SK-N-SH (cell line): ENCODE measurements at regions of chr7 and their contacts with region 1.

Region 1: GRCh38 chr7:11212080-11212711 is 238.5 kb downstream of the PHF14 start:
- DNase-seq: peak; percentile 56
- H3K4me3 ChIP-seq: no peak overlapping the region; a peak in 1 of 4 replicates
- H3K27ac ChIP-seq: no peak overlapping the region
- H3K4me1 ChIP-seq: peaks cover 0 to 5% of the 10 kb centered on the region in 2 experiments; a peak in 2 of 4 replicates
- H3K27me3 ChIP-seq: no peaks in the 10 kb centered on the region
- CTCF ChIP-seq: peak; percentile 98
- EP300 ChIP-seq: no peak
- RAD21 ChIP-seq: peak; percentile 92

Region 2: DNA sequence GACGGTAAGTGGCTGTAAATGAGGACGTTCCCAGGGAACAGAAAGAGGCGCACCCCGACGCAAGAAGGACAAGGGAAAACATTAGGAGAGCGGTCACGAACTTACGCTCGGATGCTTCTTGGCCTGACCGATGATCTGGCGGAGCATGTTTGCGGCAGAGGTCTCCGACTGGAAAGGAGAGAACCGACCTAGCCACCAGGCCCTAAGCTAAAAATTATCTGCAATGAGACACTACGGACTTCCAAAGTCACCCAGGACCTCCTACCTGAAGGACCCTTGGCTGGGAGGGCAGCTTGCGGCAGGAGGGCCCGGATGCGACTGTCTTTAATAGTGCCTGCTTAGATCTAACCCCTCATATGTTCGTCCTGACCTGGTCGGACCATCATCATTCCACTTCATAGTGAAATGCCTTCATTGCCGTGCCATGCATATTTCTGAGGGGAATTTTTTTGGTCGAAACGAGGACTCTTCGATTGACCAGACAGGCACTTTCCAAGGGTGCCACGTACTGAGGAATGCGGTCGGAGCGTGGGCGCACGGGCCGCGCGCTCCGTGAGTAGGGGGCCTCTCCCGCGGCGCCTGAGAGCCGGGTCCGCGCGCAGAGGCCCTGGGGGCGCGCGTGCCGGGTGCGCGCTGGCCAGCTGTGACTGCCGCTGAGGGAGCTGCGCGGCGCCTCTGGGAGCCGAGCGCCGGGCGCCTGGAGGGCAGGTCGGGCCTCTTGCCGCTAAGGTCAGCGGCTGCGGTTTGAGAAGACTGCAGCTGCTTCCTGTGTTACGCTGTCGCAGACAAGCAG is 272.1 kb before region 1 on chr7:
- CTCF ChIA-PET with region 1: interaction called, 19 read pairs
- POLR2A ChIA-PET with region 1: interaction called, 12 read pairs
- DNase-seq: peak; percentile 99
- H3K4me3 ChIP-seq: peak overlapping the region; percentile 91 to 92
- H3K27ac ChIP-seq: peak overlapping the region; percentile 95 to 99
- H3K4me1 ChIP-seq: peaks cover 5 to 18% of the 10 kb centered on the region in 2 experiments; a peak in 2 of 4 replicates
- H3K27me3 ChIP-seq: no peaks in the 10 kb centered on the region
- CTCF ChIP-seq: no peak
- EP300 ChIP-seq: no peak
- RAD21 ChIP-seq: peak; percentile 30

Region 3: DNA sequence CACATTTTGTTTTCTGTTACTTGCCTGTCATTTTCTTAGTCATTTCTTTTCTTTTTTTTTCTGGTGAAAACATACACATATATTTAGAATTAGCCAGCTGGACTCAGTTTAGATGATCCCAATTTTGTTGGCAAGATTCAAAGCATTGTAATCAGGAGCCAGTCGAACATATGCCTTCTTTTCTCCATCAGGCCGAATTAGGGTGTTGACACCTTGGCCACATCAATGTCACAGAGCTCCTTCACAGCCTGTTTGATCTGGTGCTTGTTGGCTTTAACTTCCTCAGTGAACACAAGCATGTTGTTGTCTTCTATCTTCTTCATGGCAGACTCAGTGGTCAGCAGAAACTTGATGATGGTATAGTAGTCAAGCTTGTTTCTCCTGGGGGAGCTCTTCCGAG is 205.9 kb before region 1 on chr7:
- CTCF ChIA-PET with region 1: no interaction called
- POLR2A ChIA-PET with region 1: no interaction called
- DNase-seq: no peak
- H3K4me3 ChIP-seq: no peak overlapping the region
- H3K27ac ChIP-seq: no peak overlapping the region
- H3K4me1 ChIP-seq: no peaks in the 10 kb centered on the region; a peak in 1 of 4 replicates
- H3K27me3 ChIP-seq: no peaks in the 10 kb centered on the region
- CTCF ChIP-seq: no peak
- EP300 ChIP-seq: no peak
- RAD21 ChIP-seq: no peak

Region 4: GRCh38 chr7:11188529-11189310 is 23.5 kb before region 1 on chr7:
- CTCF ChIA-PET with region 1: interaction called, 18 read pairs
- POLR2A ChIA-PET with region 1: no interaction called
- DNase-seq: no peak
- H3K4me3 ChIP-seq: no peak overlapping the region
- H3K27ac ChIP-seq: no peak overlapping the region
- H3K4me1 ChIP-seq: peaks cover 0 to 8% of the 10 kb centered on the region in 2 experiments; a peak in 2 of 4 replicates
- H3K27me3 ChIP-seq: no peaks in the 10 kb centered on the region
- CTCF ChIP-seq: no peak
- EP300 ChIP-seq: no peak
- RAD21 ChIP-seq: no peak

Region 5: GRCh38 chr7:11228515-11228914 is 16.3 kb after region 1 on chr7:
- CTCF ChIA-PET with region 1: interaction called, 35 read pairs
- POLR2A ChIA-PET with region 1: no interaction called
- DNase-seq: no peak
- H3K4me3 ChIP-seq: no peak overlapping the region
- H3K27ac ChIP-seq: no peak overlapping the region
- H3K4me1 ChIP-seq: no peaks in the 10 kb centered on the region; a peak in 1 of 4 replicates
- H3K27me3 ChIP-seq: no peaks in the 10 kb centered on the region
- CTCF ChIP-seq: no peak
- EP300 ChIP-seq: no peak
- RAD21 ChIP-seq: no peak

Region 6: GRCh38 chr7:11256501-11256900 is 44.3 kb after region 1 on chr7:
- CTCF ChIA-PET with region 1: interaction called, 11 read pairs
- POLR2A ChIA-PET with region 1: no interaction called
- DNase-seq: no peak
- H3K4me3 ChIP-seq: no peak overlapping the region
- H3K27ac ChIP-seq: no peak overlapping the region
- H3K4me1 ChIP-seq: peaks cover 0 to 2% of the 10 kb centered on the region in 2 experiments; a peak in 2 of 4 replicates
- H3K27me3 ChIP-seq: no peaks in the 10 kb centered on the region
- CTCF ChIP-seq: no peak
- EP300 ChIP-seq: no peak
- RAD21 ChIP-seq: no peak

Region 7: GRCh38 chr7:11437987-11438386 is 225.8 kb after region 1 on chr7:
- CTCF ChIA-PET with region 1: no interaction called
- POLR2A ChIA-PET with region 1: no interaction called
- DNase-seq: no peak
- H3K4me3 ChIP-seq: no peak overlapping the region
- H3K27ac ChIP-seq: no peak overlapping the region
- H3K4me1 ChIP-seq: peaks cover 0 to 2% of the 10 kb centered on the region in 2 experiments; a peak in 1 of 4 replicates
- H3K27me3 ChIP-seq: no peaks in the 10 kb centered on the region
- CTCF ChIP-seq: no peak
- EP300 ChIP-seq: no peak
- RAD21 ChIP-seq: no peak